Brain microvascular endothelial cell (primary cell): ENCODE measurements at regions of chr5 and their contacts with region 1.

Region 1: GRCh38 chr5:17189381-17190036 is 27.9 kb upstream of the BASP1 start:
- DNase-seq: peak; percentile 84
- H3K4me3 ChIP-seq: no peak overlapping the region
- H3K27ac ChIP-seq: peak overlapping the region; percentile 70
- H3K27me3 ChIP-seq: no peaks in the 10 kb centered on the region
- CTCF ChIP-seq: peak; percentile 84

Region 2: GRCh38 chr5:16791036-16791705 is 398.3 kb before region 1 on chr5:
- in situ Hi-C with region 1: loop called (anchors 25 kb)
- DNase-seq: peak; percentile 53
- H3K4me3 ChIP-seq: no peak overlapping the region
- H3K27ac ChIP-seq: peak overlapping the region; percentile 53
- H3K27me3 ChIP-seq: no peaks in the 10 kb centered on the region
- CTCF ChIP-seq: peak; percentile 63

Region 3: DNA sequence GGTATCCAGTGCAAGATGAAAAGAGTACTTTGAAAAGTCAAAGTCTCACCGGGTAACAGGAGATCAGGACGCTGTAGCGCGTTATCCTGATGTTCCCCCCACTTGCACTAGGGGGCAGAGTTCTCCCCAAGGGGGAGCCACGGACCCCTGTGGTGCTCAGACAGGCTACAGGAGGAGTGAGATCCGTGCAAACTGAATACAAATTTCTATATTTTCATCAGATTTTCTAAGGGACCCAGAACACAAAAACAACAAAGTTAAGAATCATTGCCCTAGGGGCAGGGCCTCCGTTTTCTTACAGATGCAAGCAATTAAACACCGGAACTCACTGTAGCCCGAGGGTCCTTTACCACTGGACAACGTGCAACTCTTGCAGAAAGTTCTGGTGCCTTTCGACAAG is 255.4 kb before region 1 on chr5:
- in situ Hi-C with region 1: loop called (anchors 25 kb)
- DNase-seq: peak; percentile 83
- H3K4me3 ChIP-seq: peak overlapping the region; percentile 94
- H3K27ac ChIP-seq: peak overlapping the region; percentile 97
- H3K27me3 ChIP-seq: no peaks in the 10 kb centered on the region
- CTCF ChIP-seq: peak; percentile 98

Region 4: GRCh38 chr5:16970826-16971225 is 218.7 kb before region 1 on chr5:
- in situ Hi-C with region 1: no loop called
- DNase-seq: peak; percentile 34
- H3K4me3 ChIP-seq: no peak overlapping the region
- H3K27ac ChIP-seq: no peak overlapping the region
- H3K27me3 ChIP-seq: no peaks in the 10 kb centered on the region
- CTCF ChIP-seq: no peak

Region 5: DNA sequence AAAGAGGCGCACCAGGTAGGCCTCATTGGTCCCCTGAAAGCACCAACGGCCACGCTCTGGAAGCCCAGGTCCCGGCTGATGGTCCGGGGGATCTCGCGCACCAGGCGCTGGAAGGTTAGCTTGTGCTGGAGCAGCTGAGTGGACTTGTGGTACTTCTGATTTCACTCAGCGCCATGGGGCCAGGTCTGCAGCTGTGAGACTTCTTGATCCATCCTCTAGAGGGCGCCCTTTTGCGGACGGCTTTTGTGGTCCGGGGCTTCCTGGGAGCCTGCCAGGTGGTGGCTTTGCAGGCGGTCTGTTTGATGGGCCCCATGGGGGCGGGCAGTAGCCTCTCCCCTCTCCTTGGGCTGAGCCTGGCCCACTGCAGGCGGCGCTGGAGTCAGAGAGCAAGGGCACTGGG is 431.1 kb after region 1 on chr5:
- in situ Hi-C with region 1: no loop called
- DNase-seq: no peak
- H3K4me3 ChIP-seq: no peak overlapping the region
- H3K27ac ChIP-seq: no peak overlapping the region
- H3K27me3 ChIP-seq: no peaks in the 10 kb centered on the region
- CTCF ChIP-seq: peak; percentile 3